Kidney (tissue), 22 donors: ENCODE measurements at regions of chr17 and their contacts with region 1.

Region 1: DNA sequence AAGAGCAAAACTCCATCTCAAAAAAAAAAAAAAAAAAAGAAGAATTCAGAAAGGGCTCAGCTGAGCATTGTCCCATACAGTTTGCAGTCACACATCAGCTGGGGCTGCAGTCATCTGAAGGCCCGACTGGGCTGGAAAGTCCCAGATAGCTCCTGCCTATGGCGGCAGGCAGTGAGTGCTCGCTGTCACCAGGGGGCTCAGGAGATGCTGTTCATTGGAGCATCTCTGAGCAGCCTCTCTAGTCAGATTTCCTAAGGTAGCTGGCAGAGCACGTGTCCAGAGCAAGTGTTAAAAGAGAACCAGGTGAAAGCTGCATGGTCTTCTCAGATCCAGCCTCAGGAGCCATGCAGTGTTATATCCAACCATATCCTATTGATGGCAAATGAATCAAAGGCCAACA is 75.8 kb downstream of the WSCD1 start:
- DNase-seq: no peak
- H3K4me3 ChIP-seq: no peak overlapping the region
- H3K27ac ChIP-seq: no peak overlapping the region
- H3K4me1 ChIP-seq: no peaks in the 10 kb centered on the region
- H3K27me3 ChIP-seq: no peaks in the 10 kb centered on the region
- CTCF ChIP-seq: no peak

Region 2: GRCh38 chr17:6027342-6028024 is 118.5 kb before region 1 on chr17:
- intact Hi-C with region 1: no loop called
- DNase-seq: peak; percentile 57 to 83 (median 75)
- H3K4me3 ChIP-seq: no peak overlapping the region
- H3K27ac ChIP-seq: peak overlapping the region; percentile 71 to 86
- H3K4me1 ChIP-seq: peaks cover 0 to 9% (median 4%) of the 10 kb centered on the region in 3 donors
- H3K27me3 ChIP-seq: no peaks in the 10 kb centered on the region
- CTCF ChIP-seq: no peak

Region 3: DNA sequence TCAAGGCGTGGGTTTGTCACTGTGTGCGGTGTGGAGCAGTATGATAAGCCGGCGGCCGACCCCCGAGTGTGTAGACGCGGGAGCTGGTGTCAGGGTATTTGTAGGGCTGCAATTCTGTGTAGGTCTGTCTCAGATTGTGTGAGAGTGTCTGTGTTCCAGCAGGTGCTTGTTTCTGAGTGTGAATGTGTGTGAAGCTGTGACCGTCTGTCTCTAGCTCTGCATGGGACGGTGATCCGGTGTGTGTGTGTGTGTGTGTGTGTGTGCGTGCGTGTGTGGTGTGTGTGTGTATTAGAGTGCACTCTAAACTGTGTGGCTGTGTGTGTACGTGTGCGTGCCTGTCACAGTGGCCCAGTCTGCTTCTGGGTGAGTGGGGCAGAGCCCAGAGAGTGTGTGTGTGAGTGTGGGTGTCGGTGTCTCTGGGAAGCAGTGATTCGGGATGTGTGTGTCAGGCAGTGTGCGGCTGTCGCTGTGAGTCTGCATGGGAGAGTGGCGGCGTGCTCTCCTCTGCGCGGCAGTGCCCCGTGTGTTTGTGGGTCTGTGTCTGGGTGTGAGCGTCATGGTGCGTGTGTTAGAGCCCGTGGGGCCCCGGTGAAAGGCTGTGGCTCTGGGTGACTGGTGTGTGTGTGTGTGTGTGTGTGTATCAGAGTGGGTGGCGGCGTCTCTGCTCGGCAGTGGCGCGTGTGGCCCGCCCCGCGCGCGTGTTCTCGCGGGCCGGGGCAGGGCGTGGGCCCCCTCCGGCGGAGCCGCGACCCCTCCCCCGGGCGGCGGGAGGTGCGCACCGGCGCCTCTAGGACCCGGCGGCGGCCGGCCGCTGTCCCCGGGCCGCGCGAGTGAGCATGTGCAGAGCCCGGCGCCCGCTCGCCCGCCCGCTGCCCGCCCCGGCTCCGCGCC is 76.2 kb before region 1 on chr17 and contains the start of gene WSCD1:
- intact Hi-C with region 1: loop called (anchors 10 kb)
- DNase-seq: peak; percentile 42 to 70 (median 56)
- H3K4me3 ChIP-seq: peak within 1 kb of the TSS; percentile 71 to 76 (median 75)
- H3K27ac ChIP-seq: no peak within 1 kb of the TSS
- H3K4me1 ChIP-seq: peaks cover 0 to 13% (median 0%) of the 10 kb centered on the region in 3 donors
- H3K27me3 ChIP-seq: peaks cover 5% of the 10 kb centered on the region
- CTCF ChIP-seq: no peak
- total RNA-seq, gene WSCD1: 14.5 TPM